ENCODE measurements at regions of chrX and their contacts with region 1.

Region 1: DNA sequence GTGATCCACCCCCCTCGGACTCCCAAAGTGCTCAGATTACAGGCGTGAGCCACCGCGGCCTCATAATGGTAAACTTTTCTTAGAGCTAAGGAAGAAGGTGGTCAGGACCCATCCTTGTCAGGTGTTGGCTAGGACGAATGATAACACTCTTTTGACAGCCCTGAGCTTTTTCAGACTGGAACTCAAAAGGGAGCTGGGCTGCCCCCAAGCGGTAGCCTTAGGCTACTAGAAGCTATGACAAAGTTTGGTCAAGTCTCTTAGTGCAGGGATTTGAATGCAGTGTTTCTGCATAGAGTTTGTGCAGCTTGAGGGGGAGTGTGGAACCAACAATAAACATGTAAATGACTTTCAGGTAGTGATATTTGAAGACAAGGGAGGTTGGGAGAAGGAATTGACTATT is 11.8 kb upstream of the HSD17B10 start:
- DNase-seq: peak; percentile 50
- CTCF ChIP-seq: peak; percentile 62

Region 2: GRCh38 chrX:53312946-53313727 is 132.8 kb before region 1 on chrX:
- in situ Hi-C with region 1: loop called (anchors 5 kb)
- DNase-seq: peak; percentile 68
- CTCF ChIP-seq: peak; percentile 82